Ascending aorta (tissue), 2 donors: ENCODE measurements at regions of chr11 and their contacts with region 1.

Region 1: DNA sequence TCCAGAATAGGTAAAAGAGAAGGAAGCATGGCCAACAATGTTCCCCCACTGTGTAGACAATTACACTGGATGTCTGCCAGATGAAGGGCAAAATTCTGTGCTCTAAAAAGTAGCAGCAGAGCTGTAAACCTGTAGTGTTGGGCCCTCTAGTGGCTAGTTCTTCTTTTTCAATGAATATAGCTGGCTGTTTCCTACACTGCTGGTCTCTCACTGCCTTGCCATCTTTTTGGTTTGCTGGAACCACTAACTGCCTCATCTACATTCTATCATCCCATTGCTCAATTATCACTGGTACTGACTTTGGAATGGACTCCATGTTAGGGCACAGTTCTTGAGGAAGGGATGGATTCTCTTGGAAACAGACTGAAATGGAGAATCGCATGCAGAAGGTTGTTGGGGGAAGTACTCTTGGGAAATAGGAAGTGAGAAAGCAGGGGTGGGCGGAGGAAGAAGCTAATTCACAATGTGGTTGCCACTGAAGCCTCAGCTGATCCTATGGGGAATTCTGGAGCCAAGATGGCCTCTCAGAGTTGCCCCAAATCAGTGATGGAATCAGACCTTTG is 17.9 kb downstream of the KCNE3 start:
- DNase-seq: peak in 1 of 2 donors; percentile 71
- H3K4me3 ChIP-seq: no peak overlapping the region
- H3K27ac ChIP-seq: no peak overlapping the region
- H3K4me1 ChIP-seq: no peaks in the 10 kb centered on the region
- H3K27me3 ChIP-seq: no peaks in the 10 kb centered on the region
- CTCF ChIP-seq: peak; percentile 61 to 88 (median 73)

Region 2: DNA sequence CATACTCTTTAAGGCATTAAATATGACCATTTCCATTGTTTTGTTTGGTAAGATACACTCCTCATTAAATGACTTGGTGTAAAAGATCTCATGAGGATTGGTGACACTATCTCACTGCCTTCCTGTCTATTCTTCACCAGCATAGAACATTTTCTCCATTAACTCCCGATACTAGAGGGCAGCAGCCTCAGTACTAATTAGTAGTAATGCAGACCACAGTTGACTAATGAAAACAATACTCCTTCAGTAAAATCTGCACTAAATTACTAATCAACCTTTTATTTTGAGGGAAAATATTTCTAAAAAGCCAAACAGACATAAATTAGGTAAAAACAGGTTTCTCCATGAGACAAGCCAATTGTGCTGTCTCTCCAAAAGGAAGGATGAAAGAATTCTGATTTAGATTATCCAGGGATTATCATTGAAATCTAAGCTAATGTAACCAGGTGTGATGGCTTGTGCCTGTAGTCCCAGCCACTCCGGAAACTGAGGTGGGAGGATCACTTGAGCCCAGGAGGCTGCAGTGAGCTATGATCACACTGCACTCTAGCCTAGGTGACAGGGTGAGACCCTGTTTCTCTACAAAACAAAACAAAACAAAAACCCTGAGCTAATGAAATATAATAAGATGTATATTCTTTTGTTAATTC is 60.6 kb before region 1 on chr11:
- intact Hi-C with region 1: loop called (anchors 1 kb)
- DNase-seq: peak in 1 of 2 donors; percentile 78
- H3K4me3 ChIP-seq: no peak overlapping the region
- H3K27ac ChIP-seq: no peak overlapping the region
- H3K4me1 ChIP-seq: peaks cover 0 to 3% of the 10 kb centered on the region in 2 donors
- H3K27me3 ChIP-seq: no peaks in the 10 kb centered on the region
- CTCF ChIP-seq: peak; percentile 47 to 71 (median 65)

Region 3: DNA sequence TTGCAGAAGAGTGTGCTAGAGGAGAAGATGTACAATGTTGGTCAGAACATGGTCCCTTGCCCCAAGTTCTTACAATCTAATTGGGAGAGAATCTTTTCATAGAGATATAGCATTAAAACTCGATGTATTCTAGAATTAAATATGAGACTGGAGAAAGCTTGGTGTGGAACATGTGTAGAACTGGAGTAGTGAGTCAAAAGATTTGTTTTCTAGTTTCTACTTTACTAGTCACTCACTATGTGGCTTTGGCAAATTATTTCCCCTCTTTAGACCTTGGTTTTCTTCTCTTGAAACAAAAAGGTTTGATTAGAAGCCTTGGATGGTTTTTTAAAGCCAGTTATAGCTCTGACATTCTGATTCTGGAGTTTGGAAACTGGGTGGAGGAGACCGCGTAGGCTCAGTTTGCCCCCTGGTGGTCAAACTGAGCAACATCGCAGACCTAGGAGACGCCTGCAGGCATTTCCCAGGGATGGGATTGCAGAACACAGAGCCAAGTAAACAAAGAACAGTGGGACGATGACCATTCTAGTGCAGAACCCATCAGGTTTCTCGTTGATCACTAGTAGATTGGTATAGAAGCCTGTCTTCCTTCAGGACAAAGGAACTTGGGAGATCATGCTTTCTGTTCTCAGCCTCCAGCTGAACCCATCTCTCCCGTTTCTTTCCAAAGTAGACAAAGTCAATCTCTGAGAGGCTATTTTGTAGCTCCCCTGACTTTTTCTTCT is 290.3 kb after region 1 on chr11:
- intact Hi-C with region 1: loop called (anchors 1 kb)
- DNase-seq: no peak
- H3K4me3 ChIP-seq: no peak overlapping the region
- H3K27ac ChIP-seq: no peak overlapping the region
- H3K4me1 ChIP-seq: no peaks in the 10 kb centered on the region
- H3K27me3 ChIP-seq: no peaks in the 10 kb centered on the region
- CTCF ChIP-seq: peak; percentile 73 to 91 (median 86)